HepG2 (cell line): ENCODE measurements at regions of chr16 and their contacts with region 1.

Region 1: GRCh38 chr16:50741808-50742575 is at the start of gene CYLD:
- DNase-seq: peak; percentile 99
- ATAC-seq: peak; percentile 98
- H3K4me3 ChIP-seq: peak within 1 kb of the TSS; percentile 77 to 94 (median 86)
- H3K27ac ChIP-seq: no peak within 1 kb of the TSS
- H3K4me1 ChIP-seq: peaks cover 19% of the 10 kb centered on the region
- H3K27me3 ChIP-seq: 0 out of 5 replicates have a peak, but pooled peaks cover 0 to 5% of the 10 kb centered on the region in 2 experiments
- CTCF ChIP-seq: no peak
- EP300 ChIP-seq: no peak
- POLR2A ChIP-seq: no peak; a peak in 1 of 4 replicates
- RAD21 ChIP-seq: 0 out of 2 replicates have a peak, but pooled peaks have one; percentile 26
- total RNA-seq, gene CYLD: 11.4 and 16.0 TPM in 2 replicates

Region 2: DNA sequence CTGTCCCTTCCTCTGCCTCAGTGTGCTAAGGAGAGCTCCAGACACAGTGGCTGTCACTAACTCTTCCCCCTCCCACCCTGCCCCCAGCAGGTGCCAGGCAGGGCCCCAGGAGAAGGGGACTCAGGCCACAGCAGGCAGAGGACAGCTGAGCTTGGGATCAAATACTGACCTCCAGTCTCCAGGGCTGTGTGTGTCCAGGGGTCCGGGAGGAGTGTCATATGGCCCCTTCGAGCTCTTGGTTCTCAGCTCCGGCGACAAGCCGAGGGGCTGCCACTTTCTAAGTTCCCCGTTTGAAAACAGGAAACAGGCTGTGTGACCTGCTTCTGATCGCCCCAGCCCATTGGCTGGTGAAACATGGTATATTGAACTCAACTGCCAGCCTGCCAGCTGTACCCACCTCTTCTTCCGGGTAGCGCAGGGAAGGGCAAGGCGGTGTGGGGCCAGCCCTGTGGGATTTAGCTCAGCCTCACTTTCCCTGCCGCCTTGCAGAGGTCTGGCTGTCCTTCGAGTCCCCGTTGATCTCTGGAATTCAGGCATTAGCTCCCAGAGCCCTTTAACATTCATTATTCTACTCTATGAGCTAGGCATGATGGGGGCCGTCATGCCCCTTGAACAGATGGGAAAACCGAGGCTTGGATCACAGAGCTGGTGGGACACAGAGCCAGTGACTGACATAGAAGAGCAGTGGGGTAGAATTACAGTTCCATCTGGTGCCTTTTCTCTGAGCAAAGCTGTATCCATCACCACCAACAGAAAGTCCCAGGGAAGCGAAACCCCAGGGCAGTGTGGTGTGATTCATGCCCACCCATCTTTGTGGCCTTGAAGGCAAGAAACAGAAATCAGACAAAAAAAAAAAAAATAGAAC is 60.7 kb before region 1 on chr16 and contains the start of gene SNX20:
- CTCF ChIA-PET with region 1: no interaction called
- POLR2A ChIA-PET with region 1: no interaction called
- in situ Hi-C with region 1: no loop called
- intact Hi-C with region 1: no loop called
- DNase-seq: no peak
- ATAC-seq: no peak
- H3K4me3 ChIP-seq: no peak within 1 kb of the TSS
- H3K27ac ChIP-seq: no peak within 1 kb of the TSS
- H3K4me1 ChIP-seq: peaks cover 10% of the 10 kb centered on the region
- H3K27me3 ChIP-seq: peaks cover 0 to 15% of the 10 kb centered on the region in 2 experiments; a peak in 4 of 5 replicates
- CTCF ChIP-seq: no peak
- EP300 ChIP-seq: no peak
- POLR2A ChIP-seq: no peak
- RAD21 ChIP-seq: no peak
- total RNA-seq, gene SNX20: not detected in 2 replicates

Region 3: DNA sequence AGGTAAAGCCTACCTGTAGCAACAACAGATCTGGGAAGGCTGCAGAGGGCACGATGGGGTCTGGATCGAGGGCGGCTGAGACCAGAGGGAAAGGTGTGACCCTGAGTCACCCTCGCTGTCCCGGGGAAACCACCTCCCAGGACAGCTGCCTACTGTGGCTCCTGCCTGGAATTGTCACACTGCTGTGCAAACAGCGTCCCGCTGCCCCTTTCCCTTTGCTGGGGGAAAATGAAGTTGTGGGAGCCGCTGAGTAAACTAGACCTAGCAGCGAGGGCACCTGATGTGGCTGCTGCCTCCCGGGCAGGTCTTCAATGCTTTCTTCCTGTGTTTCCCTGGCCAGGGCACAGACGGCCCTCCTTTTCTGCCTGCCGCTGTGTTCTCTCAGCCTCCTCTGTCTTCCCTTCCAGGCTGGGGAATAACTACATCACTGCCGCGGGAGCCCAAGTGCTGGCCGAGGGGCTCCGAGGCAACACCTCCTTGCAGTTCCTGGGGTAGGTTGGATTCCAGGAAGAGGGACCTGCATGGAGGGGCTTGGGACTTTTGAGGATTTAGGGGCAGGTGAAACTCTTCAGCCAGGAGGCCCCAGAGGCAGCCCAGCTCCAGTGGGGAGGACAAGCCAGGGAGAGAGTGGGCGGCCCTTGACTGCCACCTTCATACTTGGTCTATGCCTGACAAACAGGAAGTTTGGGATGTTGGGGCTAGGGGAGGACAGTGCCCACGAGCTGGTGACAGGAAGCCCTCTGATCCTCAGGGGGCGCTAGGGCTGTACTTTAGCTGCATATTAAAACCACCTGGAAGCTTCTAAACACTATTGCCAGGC is 22.3 kb before region 1 on chr16:
- CTCF ChIA-PET with region 1: no interaction called
- POLR2A ChIA-PET with region 1: interaction called, 14 read pairs
- in situ Hi-C with region 1: no loop called
- intact Hi-C with region 1: loop called (anchors 2 kb)
- DNase-seq: peak; percentile 65
- ATAC-seq: peak; percentile 92
- H3K4me3 ChIP-seq: peak overlapping the region; percentile 59 to 71 (median 66)
- H3K27ac ChIP-seq: peak overlapping the region; percentile 9
- H3K4me1 ChIP-seq: peaks cover 42% of the 10 kb centered on the region
- H3K27me3 ChIP-seq: peaks cover 1 to 6% of the 10 kb centered on the region in 2 experiments; a peak in 1 of 5 replicates
- CTCF ChIP-seq: peak; percentile 72
- EP300 ChIP-seq: no peak
- POLR2A ChIP-seq: no peak
- RAD21 ChIP-seq: no peak; the same call in 1 of the 2 replicates

Region 4: DNA sequence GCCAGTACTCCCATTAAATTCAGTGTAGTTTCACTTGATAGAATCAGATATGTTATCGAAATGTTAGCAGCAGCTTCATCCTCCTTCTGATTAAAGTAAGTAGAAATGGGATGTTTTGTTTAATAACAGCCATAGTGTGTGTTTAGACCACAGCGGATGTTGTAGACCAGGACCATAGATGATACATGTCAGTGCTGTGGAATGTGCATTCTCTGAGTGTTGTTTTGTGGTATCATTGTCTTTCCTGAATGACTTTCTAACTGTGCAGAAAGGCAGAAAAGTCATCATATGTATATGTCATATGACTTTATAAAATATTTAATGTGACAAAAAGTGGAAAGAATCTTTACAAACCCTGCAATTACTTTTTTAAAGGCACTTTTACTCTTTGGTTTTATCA is 55.5 kb after region 1 on chr16:
- CTCF ChIA-PET with region 1: no interaction called
- POLR2A ChIA-PET with region 1: no interaction called
- in situ Hi-C with region 1: no loop called
- intact Hi-C with region 1: no loop called
- DNase-seq: no peak
- ATAC-seq: no peak
- H3K4me3 ChIP-seq: no peak overlapping the region
- H3K27ac ChIP-seq: no peak overlapping the region
- H3K4me1 ChIP-seq: no peaks in the 10 kb centered on the region
- H3K27me3 ChIP-seq: no peaks in the 10 kb centered on the region
- CTCF ChIP-seq: no peak
- EP300 ChIP-seq: no peak
- POLR2A ChIP-seq: no peak
- RAD21 ChIP-seq: no peak

Region 5: DNA sequence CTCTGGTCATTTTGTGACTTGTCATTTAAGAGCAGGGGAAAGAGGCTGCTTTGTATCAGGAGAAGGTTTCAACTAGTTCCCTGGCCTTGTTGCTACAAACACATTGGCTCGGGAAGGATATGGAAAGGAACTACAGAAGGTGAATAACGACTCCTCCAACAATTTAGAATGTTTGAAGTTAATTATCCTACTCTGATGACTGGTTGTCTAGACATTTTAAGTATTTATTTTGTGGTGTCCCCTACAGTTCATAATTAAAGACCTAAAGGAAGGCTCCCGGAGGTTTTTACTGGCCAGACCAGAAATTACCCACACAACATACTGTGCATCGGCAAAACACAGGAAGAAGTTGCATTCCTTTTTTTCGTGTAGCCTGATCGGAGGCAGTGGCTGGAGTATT is 924.8 kb after region 1 on chr16:
- CTCF ChIA-PET with region 1: no interaction called
- POLR2A ChIA-PET with region 1: no interaction called
- in situ Hi-C with region 1: no loop called
- intact Hi-C with region 1: no loop called
- DNase-seq: no peak
- ATAC-seq: no peak
- H3K4me3 ChIP-seq: no peak overlapping the region
- H3K27ac ChIP-seq: no peak overlapping the region
- H3K4me1 ChIP-seq: no peaks in the 10 kb centered on the region
- H3K27me3 ChIP-seq: 0 out of 5 replicates have a peak, but pooled peaks cover 0 to 5% of the 10 kb centered on the region in 2 experiments
- CTCF ChIP-seq: no peak
- EP300 ChIP-seq: no peak
- POLR2A ChIP-seq: no peak
- RAD21 ChIP-seq: no peak